Left lung (tissue), 14 donors: ENCODE measurements at regions of chr14 and their contacts with region 1.

Region 1: GRCh38 chr14:24093901-24094761 is at the start of gene PCK2:
- DNase-seq: peak in 3 of 4 donors; percentile 94 to 99 (median 96)
- ATAC-seq: peak; percentile 94
- H3K4me3 ChIP-seq: peak within 1 kb of the TSS; percentile 89 to 93
- H3K27ac ChIP-seq: peak within 1 kb of the TSS; percentile 95
- H3K4me1 ChIP-seq: peaks cover 6 to 46% of the 10 kb centered on the region in 2 donors
- H3K27me3 ChIP-seq: no peaks in the 10 kb centered on the region
- CTCF ChIP-seq: no peak
- polyA plus RNA-seq, gene PCK2: 12.9 to 18.9 (median 15.7) TPM

Region 2: DNA sequence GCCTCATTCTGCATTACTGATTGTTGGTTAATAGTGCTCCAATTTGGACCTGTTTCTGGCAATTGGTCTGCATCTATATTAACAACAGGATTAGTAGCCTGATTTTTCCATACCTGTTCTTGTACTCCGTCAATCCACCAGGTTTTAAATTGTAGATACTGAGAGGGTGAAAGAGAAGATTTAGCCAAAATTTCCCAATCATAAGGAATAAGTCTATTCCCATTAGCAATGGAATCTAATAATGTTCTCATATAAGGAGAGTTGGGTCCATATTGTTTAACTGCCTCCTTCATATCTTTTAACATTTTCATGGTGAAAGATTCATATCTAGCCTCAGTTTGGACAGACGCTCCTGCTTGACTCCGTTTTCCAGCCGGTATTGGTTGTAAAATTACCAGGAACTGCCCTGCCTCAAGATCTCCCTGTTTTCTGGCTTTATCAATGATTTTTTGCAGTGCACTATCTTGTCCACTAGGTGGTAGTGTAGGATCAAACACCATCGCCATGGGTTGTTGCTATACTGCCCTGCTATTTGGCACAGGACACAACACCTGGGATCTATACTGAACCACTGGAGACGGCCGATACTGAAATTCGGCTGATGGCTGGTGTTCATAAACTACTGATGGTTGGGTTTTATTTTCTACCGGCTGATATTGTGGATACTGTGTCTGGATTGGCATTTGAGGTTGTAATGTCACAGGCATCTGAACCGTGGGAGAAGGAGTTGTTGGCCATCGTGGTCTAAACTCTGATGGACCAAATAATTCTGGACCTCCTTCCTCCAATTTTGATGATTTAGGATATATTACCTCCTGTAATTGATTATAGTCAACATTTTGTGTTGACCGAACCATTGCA is 80.2 kb before region 1 on chr14:
- intact Hi-C with region 1: loop called in 1 of 2 experiments (anchors 10 kb)
- DNase-seq: peak in 2 of 4 donors; percentile 37 to 55
- ATAC-seq: peak; percentile 95
- H3K4me3 ChIP-seq: no peak overlapping the region
- H3K27ac ChIP-seq: no peak overlapping the region
- H3K4me1 ChIP-seq: peaks cover 0 to 8% of the 10 kb centered on the region in 2 donors
- H3K27me3 ChIP-seq: no peaks in the 10 kb centered on the region
- CTCF ChIP-seq: peak; percentile 85 to 92

Region 3: GRCh38 chr14:24179961-24180796 is 86.0 kb after region 1 on chr14:
- intact Hi-C with region 1: no loop called
- DNase-seq: peak in 1 of 4 donors; percentile 32
- ATAC-seq: no peak
- H3K4me3 ChIP-seq: no peak overlapping the region
- H3K27ac ChIP-seq: no peak overlapping the region
- H3K4me1 ChIP-seq: no peaks in the 10 kb centered on the region
- H3K27me3 ChIP-seq: no peaks in the 10 kb centered on the region
- CTCF ChIP-seq: no peak

Region 4: DNA sequence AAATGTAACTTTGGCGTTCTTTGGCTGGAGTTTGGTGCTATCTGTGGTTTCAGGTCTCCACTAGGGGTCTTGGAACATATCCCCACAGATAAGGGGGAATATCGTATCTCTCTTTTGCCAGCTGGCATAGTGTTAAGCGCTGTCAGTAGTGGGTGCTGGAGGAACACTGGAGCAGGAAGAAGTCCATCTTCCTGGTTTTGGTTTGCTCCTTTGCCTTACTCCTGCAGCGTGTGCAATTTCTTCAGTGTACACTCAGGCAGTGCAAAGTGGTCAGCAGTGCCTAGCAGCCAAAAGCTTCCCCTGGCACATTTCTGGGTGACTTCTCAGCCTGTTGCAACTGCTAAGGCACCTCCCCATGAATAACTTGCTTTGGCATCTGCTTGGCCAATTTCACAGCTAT is 257.4 kb after region 1 on chr14:
- intact Hi-C with region 1: no loop called
- DNase-seq: no peak
- ATAC-seq: peak; percentile 75
- H3K4me3 ChIP-seq: no peak overlapping the region
- H3K27ac ChIP-seq: peak overlapping the region in 1 of 2 donors; percentile 51
- H3K4me1 ChIP-seq: peaks cover 4 to 24% of the 10 kb centered on the region in 2 donors
- H3K27me3 ChIP-seq: no peaks in the 10 kb centered on the region
- CTCF ChIP-seq: no peak